ENCODE measurements at regions of chr2 and their contacts with region 1.

Region 1: DNA sequence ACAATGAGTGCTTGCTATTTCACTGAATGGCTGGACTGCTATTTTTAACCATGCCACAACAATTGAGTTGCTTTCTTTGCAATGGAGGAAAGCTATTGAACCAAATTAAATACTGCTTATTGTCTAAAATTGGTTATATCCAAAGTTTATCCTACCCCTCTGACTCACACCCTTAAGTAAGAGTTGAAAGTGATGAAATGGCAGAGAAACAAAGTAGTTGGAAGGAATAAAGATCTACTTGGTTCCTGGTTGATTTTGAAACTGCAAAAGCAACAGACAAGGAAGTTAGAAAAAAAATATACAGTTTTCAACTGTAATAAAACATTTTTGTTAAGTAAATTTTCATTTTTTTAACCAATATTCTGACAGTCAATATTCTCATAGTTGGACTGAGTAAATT is 47.6 kb downstream of the EML4 start:
- DNase-seq: no peak
- ATAC-seq: no peak
- H3K4me3 ChIP-seq: no peak overlapping the region
- H3K27ac ChIP-seq: peak overlapping the region; percentile 10
- H3K4me1 ChIP-seq: peaks cover 100% of the 10 kb centered on the region
- H3K27me3 ChIP-seq: no peaks in the 10 kb centered on the region
- CTCF ChIP-seq: no peak
- EP300 ChIP-seq: no peak
- POLR2A ChIP-seq: no peak
- RAD21 ChIP-seq: no peak

Region 2: DNA sequence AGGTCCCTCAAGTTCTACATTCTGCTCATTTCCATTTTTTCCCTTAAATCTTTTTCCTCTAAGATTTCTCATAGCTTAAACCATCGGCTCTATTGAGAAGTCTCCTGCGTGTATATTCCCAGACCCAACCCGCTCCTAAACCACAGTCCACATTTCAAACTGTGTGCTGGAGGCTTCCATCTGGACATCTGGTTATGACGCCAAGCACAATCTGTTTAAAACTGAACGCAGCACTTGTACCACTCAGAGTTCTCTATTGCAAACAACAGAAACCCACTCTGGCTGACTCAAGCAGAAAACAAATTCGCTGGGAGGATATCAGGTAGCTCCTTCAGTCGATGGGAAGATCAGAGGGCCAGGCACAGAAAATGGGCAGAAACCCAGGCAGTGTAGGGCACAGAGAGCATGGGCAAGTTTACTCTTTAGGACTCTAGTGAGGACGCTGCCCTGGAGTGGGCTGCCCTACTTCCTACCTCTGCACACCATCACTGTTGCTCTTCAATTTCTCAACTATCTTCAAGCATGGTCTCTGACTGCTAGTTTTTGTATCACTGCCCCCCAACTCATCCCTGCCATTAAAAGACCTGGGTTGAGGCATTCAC is 53.2 kb before region 1 on chr2:
- CTCF ChIA-PET with region 1: no interaction called
- POLR2A ChIA-PET with region 1: no interaction called
- in situ Hi-C with region 1: no loop called
- intact Hi-C with region 1: no loop called
- DNase-seq: no peak
- ATAC-seq: peak; percentile 44
- H3K4me3 ChIP-seq: no peak overlapping the region
- H3K27ac ChIP-seq: no peak overlapping the region
- H3K4me1 ChIP-seq: peaks cover 48% of the 10 kb centered on the region
- H3K27me3 ChIP-seq: no peaks in the 10 kb centered on the region
- CTCF ChIP-seq: no peak
- EP300 ChIP-seq: no peak
- POLR2A ChIP-seq: no peak
- RAD21 ChIP-seq: no peak

Region 3: GRCh38 chr2:42183775-42184174 is 32.9 kb before region 1 on chr2:
- CTCF ChIA-PET with region 1: no interaction called
- POLR2A ChIA-PET with region 1: no interaction called
- in situ Hi-C with region 1: no loop called
- intact Hi-C with region 1: no loop called
- DNase-seq: no peak
- ATAC-seq: no peak
- H3K4me3 ChIP-seq: peak overlapping the region in 2 of 3 experiments; percentile 6 to 22; a peak in 1 of 6 replicates
- H3K27ac ChIP-seq: peak overlapping the region; percentile 6
- H3K4me1 ChIP-seq: peaks cover 100% of the 10 kb centered on the region
- H3K27me3 ChIP-seq: no peaks in the 10 kb centered on the region
- CTCF ChIP-seq: no peak
- EP300 ChIP-seq: no peak
- POLR2A ChIP-seq: no peak
- RAD21 ChIP-seq: no peak

Region 4: DNA sequence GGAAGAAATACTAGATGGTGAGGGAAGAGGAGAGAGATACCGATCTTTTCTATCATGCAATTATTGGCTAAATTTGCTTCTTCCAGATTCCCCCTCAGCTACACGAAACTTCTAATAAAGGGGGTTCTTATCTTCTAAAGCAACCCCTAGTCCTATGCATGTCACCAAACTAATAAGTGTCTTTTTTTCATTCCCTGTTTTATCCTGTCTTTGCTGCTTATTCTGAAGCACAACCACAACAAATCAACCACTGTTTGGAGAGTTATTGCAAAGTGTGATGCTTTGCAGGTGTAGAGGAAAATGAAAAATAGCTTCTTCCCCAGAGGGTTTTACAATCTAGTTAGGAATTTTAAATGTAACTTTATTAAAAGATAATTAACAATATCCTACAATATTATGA is 13.2 kb after region 1 on chr2:
- CTCF ChIA-PET with region 1: no interaction called
- POLR2A ChIA-PET with region 1: no interaction called
- in situ Hi-C with region 1: no loop called
- intact Hi-C with region 1: loop called (anchors 2 kb)
- DNase-seq: no peak
- ATAC-seq: no peak
- H3K4me3 ChIP-seq: no peak overlapping the region
- H3K27ac ChIP-seq: peak overlapping the region; percentile 12
- H3K4me1 ChIP-seq: peaks cover 97% of the 10 kb centered on the region
- H3K27me3 ChIP-seq: no peaks in the 10 kb centered on the region
- CTCF ChIP-seq: no peak
- EP300 ChIP-seq: no peak
- POLR2A ChIP-seq: no peak
- RAD21 ChIP-seq: no peak